IMR-90 (cell line): ENCODE measurements at regions of chr12 and their contacts with region 1.

Region 1: DNA sequence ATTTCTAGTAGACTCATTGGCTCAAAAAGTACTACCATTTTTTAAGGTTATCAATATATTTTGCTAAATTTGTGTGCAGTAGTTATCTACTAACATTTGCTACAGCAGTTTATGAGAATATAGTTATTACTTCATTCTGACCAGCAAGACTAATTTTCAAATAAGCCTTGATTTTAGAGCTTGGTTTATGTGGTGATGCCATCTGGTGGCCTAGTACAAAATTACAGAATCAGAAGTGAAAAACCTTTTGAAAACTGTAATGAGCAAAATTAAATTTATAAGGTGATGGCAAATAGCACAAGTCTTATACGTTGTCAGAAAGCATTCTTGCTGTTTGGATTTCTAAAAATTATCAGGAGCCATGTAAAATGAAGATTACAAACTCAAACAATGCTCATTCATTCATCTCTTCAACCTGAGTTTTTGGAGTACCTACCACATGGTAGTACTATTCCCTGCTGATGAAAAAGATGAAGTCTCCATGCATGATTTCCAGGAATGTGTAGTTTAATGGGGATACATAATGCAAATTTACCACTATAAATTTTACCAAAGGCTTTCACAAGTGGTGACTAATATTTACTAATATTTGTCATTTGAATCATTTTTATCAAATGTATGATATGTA is 51.0 kb downstream of the MAGOHB start:
- DNase-seq: peak; percentile 54
- ATAC-seq: peak; percentile 48; the same call in 1 of the 2 replicates
- H3K4me3 ChIP-seq: no peak overlapping the region
- H3K27ac ChIP-seq: no peak overlapping the region
- H3K4me1 ChIP-seq: no peaks in the 10 kb centered on the region
- H3K27me3 ChIP-seq: peaks cover 11% of the 10 kb centered on the region
- CTCF ChIP-seq: peak; percentile 71
- POLR2A ChIP-seq: no peak
- RAD21 ChIP-seq: peak; percentile 74

Region 2: DNA sequence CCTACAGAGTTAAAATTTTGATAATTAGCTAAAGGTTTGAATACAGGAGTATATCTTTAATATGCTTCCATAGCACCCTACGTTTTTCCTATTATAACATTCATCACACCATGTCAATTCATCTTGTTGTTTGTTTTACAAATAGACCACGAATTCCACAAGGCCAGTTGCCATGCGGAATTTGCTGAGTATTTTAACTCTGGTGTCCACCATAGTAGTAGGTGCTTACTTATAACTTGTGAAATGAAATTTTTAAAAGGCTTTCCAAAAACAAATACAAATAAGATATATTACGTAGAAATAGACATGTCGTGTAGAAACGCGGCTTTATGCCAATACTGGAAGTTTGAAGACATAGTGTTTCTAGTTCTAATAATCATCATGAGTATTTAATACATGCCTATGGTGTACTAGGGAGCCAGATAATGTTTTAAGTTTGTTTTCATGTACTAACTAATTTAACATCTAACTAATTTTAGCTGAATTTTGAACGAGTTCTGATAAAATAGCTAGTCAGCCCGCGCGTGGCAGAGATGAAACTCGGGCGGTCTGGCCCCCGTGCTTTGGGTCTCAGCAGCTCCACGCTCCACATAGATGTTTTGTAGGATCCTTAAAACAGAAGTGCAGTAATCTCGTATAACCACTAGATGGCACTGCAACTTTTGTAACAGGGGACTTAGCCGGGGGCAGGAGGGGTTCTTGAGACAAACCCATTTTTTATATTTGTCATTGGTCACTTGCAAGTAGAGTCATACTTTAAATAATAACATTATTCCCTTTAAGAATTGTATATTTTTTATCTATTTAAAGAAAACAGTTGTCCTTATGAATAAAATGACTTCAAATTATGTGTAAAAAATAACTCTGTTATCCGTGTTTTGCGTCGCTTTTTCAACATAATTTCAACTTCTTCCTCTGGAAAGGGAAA is 811.9 kb before region 1 on chr12:
- CTCF ChIA-PET with region 1: interaction called, 5 read pairs
- POLR2A ChIA-PET with region 1: no interaction called
- dilution Hi-C with region 1: no loop called
- in situ Hi-C with region 1: no loop called
- intact Hi-C with region 1: loop called (anchors 2 kb)
- DNase-seq: peak; percentile 56
- ATAC-seq: peak; percentile 88
- H3K4me3 ChIP-seq: no peak overlapping the region
- H3K27ac ChIP-seq: no peak overlapping the region
- H3K4me1 ChIP-seq: no peaks in the 10 kb centered on the region
- H3K27me3 ChIP-seq: peaks cover 3% of the 10 kb centered on the region; the same call in 1 of the 2 replicates
- CTCF ChIP-seq: peak; percentile 73
- POLR2A ChIP-seq: no peak
- RAD21 ChIP-seq: peak; percentile 71

Region 3: DNA sequence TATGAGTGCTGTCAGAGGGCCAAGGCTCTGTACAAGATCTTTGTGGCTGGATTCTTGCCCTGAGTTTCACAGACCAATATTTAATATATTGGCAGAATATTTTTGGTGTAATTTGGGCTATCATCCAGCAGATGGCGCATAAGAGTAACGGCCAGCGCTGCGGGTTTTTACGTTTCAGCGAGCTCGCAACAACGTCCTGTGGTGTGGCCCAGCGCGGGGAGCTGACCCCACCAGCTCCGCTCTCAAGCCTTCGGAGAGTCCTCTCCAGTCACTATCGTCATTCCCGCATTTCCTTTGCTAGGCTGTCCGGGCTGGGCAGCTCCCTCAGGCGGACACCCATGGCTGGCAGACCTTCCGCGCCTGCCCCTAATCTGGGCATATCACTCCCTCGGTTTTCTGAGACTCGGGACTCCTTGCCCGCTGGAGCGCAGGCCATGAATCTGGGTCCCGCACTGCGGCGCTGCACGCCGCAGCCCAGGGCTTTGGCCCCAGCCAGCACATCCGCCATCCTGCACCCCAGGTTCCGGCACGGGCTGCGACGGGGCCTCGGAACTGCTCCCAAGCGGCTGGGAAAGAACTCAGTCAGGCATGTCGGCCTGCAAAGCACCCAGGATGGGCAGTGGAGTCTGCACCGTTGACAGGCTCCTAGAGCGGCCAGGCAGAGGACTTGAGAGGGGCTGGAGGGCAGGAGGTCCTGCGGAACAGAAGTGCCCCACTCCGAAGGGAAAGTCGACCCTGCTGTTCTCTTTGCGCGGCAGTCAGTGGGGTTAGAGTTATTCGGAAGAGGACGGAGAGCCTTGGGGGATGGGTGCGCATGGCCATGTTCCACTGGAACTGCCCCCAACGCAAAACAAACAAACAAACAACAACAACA is 408.9 kb before region 1 on chr12:
- CTCF ChIA-PET with region 1: no interaction called
- POLR2A ChIA-PET with region 1: no interaction called
- dilution Hi-C with region 1: no loop called
- in situ Hi-C with region 1: no loop called
- intact Hi-C with region 1: loop called (anchors 2 kb)
- DNase-seq: peak; percentile 63
- ATAC-seq: peak; percentile 95
- H3K4me3 ChIP-seq: peak overlapping the region; percentile 37
- H3K27ac ChIP-seq: peak overlapping the region; percentile 68
- H3K4me1 ChIP-seq: peaks cover 8% of the 10 kb centered on the region
- H3K27me3 ChIP-seq: no peaks in the 10 kb centered on the region
- CTCF ChIP-seq: peak; percentile 75
- POLR2A ChIP-seq: no peak
- RAD21 ChIP-seq: peak; percentile 77

Region 4: DNA sequence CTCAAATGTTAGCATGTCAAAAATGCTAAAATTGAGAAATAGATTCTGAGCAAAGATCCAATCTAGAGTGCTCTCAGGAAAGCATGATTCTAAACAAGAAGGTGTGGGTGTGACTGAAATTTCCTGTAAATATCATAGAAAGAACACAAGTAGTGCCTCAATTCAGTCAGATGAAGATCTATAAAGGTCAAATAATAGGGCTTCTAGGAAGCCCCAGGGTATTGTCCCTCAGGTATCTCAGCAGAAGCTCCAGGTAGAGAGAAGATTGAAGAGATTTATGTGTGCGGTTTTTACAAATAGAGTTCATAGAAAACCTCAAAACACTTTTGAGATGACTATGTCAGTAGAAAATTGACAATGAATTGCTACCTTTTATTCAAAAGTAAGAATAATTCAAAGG is 241.8 kb before region 1 on chr12:
- CTCF ChIA-PET with region 1: interaction called, 3 read pairs
- POLR2A ChIA-PET with region 1: no interaction called
- dilution Hi-C with region 1: no loop called
- in situ Hi-C with region 1: loop called (anchors 10 kb)
- intact Hi-C with region 1: no loop called
- DNase-seq: no peak
- ATAC-seq: no peak
- H3K4me3 ChIP-seq: no peak overlapping the region
- H3K27ac ChIP-seq: no peak overlapping the region
- H3K4me1 ChIP-seq: no peaks in the 10 kb centered on the region
- H3K27me3 ChIP-seq: peaks cover 15% of the 10 kb centered on the region
- CTCF ChIP-seq: no peak
- POLR2A ChIP-seq: no peak
- RAD21 ChIP-seq: no peak

Region 5: GRCh38 chr12:10364815-10365622 is 197.4 kb before region 1 on chr12:
- CTCF ChIA-PET with region 1: interaction called, 4 read pairs
- POLR2A ChIA-PET with region 1: no interaction called
- dilution Hi-C with region 1: no loop called
- in situ Hi-C with region 1: no loop called
- intact Hi-C with region 1: loop called (anchors 2 kb)
- DNase-seq: peak; percentile 84
- ATAC-seq: peak; percentile 58
- H3K4me3 ChIP-seq: peak overlapping the region; percentile 54
- H3K27ac ChIP-seq: peak overlapping the region; percentile 92
- H3K4me1 ChIP-seq: peaks cover 22% of the 10 kb centered on the region
- H3K27me3 ChIP-seq: no peaks in the 10 kb centered on the region
- CTCF ChIP-seq: no peak
- POLR2A ChIP-seq: no peak
- RAD21 ChIP-seq: no peak; the same call in 1 of the 2 replicates